Activated CD4-positive, alpha-beta memory T cell treated with anti-CD3 and anti-CD28 coated beads, Interleukin-2, amount 10 ng/mL, durations not matched to agents 7 days and 5 days (primary cell): ENCODE measurements at regions of chr10 and their contacts with region 1.

Region 1: DNA sequence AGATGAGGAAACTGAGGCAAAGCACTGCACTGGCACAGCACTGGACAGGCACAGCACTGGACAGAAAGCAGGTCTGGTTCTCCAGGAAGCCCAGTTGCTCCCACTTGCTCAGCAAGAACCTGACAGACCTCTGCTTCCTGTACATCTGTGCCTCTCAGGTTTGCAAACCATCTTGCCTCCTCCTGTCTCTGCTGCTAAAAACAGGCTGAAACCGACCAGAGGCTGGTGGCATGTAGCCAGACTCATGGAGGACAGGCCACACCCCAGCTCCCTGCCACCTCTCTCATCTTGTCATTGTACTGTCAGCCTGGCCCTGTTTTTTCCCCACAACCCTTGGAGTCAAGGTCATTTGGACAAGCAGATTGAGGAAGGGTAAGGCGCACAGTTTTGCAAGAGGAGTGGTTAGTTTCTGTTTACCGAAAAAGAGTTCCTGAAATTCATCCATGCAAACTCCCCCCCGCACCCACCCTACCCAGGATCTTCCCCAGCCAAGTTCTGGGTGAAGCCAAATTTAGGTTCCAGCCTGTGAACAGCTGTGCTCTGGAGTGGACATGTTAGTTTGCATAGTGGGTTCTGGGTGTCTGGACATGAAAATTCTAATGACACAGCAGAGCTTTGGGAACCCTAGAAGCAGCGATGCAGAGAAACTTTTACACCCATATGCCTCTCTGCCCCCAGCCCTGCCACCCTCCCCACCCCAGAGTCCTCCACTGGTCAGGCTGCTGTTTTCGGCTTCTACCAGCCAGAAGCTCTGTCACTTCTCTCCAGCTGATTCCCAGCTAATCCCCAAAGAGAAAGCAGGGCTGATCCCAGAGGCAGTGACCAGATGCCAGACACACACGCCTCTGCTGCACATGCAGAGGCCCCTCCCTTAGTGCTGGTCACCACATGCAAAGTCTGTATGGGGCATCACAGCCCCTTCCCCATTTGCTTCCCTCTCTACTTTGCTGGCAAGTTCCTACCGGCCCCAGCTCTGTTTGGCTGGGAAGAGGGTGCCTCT is 8.5 kb upstream of the C10orf105 start:
- DNase-seq: peak; percentile 76
- H3K4me3 Mint-ChIP-seq: peak overlapping the region; percentile 52
- H3K27ac Mint-ChIP-seq: peak overlapping the region; percentile 98
- H3K4me1 Mint-ChIP-seq: peaks cover 76% of the 10 kb centered on the region
- H3K27me3 Mint-ChIP-seq: no peaks in the 10 kb centered on the region

Region 2: GRCh38 chr10:71561003-71561574 is 166.9 kb before region 1 on chr10:
- CTCF ChIA-PET with region 1: no interaction called
- POLR2A ChIA-PET with region 1: no interaction called
- DNase-seq: no peak
- H3K4me3 Mint-ChIP-seq: no peak overlapping the region
- H3K27ac Mint-ChIP-seq: no peak overlapping the region
- H3K4me1 Mint-ChIP-seq: no peaks in the 10 kb centered on the region
- H3K27me3 Mint-ChIP-seq: peaks cover 27% of the 10 kb centered on the region

Region 3: DNA sequence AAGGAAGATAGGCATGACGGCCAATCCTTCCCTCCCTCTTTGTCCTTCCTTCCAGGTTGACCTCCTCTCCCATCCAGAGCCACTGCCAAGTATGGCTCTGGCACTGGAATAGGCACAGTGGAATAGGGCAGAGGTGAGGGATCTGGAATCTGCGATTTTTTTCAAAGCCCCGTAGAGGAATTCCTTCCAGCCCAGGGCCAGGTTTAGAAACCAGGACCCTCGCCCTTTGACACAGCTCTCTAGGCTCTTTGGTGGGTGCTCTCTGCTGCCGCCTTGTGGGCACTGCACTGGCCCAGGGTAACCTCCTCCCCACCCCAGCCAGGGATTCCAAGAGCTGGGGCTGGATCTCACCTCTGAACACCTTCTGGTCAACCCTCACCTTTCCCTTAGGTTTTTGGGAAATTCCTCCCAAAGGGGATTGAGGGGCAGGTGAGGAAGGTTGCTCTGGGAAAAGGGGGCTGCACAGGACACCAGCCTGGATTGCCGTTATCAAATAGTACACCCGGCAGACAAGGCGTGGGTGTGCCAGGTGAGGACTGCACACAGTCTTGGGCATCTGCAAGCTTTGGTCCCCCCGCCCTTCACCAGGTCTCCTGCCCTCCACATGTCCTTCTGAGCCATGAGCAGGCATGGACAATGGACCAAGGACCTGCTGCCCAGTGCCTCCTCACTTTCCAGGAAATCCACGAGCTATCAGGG is 31.3 kb before region 1 on chr10:
- CTCF ChIA-PET with region 1: interaction called, 35 read pairs
- POLR2A ChIA-PET with region 1: interaction called, 12 read pairs
- DNase-seq: peak; percentile 71
- H3K4me3 Mint-ChIP-seq: no peak overlapping the region
- H3K27ac Mint-ChIP-seq: no peak overlapping the region
- H3K4me1 Mint-ChIP-seq: peaks cover 65% of the 10 kb centered on the region
- H3K27me3 Mint-ChIP-seq: no peaks in the 10 kb centered on the region

Region 4: GRCh38 chr10:71713135-71714030 is 14.7 kb before region 1 on chr10:
- CTCF ChIA-PET with region 1: interaction called, 16 read pairs
- POLR2A ChIA-PET with region 1: interaction called, 47 read pairs
- DNase-seq: peak; percentile 52
- H3K4me3 Mint-ChIP-seq: peak overlapping the region; percentile 66
- H3K27ac Mint-ChIP-seq: peak overlapping the region; percentile 92
- H3K4me1 Mint-ChIP-seq: peaks cover 54% of the 10 kb centered on the region
- H3K27me3 Mint-ChIP-seq: no peaks in the 10 kb centered on the region

Region 5: DNA sequence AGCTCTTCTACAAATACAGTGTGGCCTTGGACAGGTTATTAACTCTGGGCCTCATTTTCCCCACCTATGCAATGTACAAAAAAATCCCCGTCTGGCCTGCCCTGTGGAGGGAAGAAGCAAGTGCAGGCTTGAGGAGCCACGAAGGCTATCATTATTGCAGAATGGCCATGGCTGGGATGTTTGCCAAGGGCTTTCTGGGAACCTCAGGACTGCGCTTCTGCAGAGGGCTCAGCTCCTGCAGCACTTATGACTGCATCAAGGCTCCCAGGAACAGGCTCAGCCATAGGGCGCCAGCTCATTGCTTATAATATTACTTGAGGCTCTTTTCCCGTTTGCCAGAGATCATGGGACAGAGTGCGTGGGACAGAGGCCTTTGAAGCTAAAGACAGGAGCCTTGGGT is 12.0 kb after region 1 on chr10:
- CTCF ChIA-PET with region 1: interaction called, 23 read pairs
- POLR2A ChIA-PET with region 1: interaction called, 310 read pairs
- DNase-seq: no peak
- H3K4me3 Mint-ChIP-seq: no peak overlapping the region
- H3K27ac Mint-ChIP-seq: no peak overlapping the region
- H3K4me1 Mint-ChIP-seq: peaks cover 90% of the 10 kb centered on the region
- H3K27me3 Mint-ChIP-seq: no peaks in the 10 kb centered on the region

Region 6: GRCh38 chr10:71748671-71749191 is 20.7 kb after region 1 on chr10:
- CTCF ChIA-PET with region 1: interaction called, 40 read pairs
- POLR2A ChIA-PET with region 1: interaction called, 310 read pairs
- DNase-seq: peak; percentile 93
- H3K4me3 Mint-ChIP-seq: peak overlapping the region; percentile 43
- H3K27ac Mint-ChIP-seq: peak overlapping the region; percentile 95
- H3K4me1 Mint-ChIP-seq: peaks cover 97% of the 10 kb centered on the region
- H3K27me3 Mint-ChIP-seq: no peaks in the 10 kb centered on the region

Region 7: GRCh38 chr10:71756311-71757191 is 28.5 kb after region 1 on chr10:
- CTCF ChIA-PET with region 1: interaction called, 14 read pairs
- POLR2A ChIA-PET with region 1: interaction called, 37 read pairs
- DNase-seq: no peak
- H3K4me3 Mint-ChIP-seq: peak overlapping the region; percentile 21
- H3K27ac Mint-ChIP-seq: peak overlapping the region; percentile 87
- H3K4me1 Mint-ChIP-seq: peaks cover 78% of the 10 kb centered on the region
- H3K27me3 Mint-ChIP-seq: no peaks in the 10 kb centered on the region

Region 8: DNA sequence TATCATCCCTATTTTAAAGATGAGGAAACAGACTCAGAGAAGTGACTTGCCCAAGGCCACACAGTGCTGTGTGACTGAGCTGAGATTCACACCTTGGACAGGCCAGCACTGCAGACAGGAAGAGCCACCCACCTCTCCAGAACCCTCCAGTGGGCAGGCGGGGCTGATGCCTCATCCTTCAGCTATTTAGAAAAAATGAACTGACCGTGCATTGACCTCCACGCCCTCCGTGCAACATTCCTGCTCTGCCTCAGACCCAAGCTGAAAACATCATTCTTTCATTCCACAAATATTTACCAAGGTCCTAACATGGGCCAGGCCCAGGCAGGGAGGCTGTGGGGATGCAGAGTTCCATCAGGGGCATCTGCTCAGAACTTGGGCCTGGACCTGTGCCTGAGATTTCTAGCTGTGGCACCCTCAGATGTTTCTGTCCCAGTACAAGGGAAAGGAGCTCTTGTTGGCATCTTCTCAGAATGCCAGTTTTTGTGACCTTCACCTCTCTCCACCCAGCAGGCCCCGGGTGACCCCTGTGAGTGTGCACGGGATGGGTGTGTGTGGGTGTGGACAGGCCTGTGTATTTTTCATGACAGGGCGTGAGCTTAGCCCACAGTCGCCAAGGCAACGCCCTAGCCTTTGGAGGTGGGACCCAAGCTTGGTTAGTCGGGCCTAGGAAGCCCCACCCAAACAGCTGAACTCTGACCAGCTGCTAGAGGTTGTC is 38.8 kb after region 1 on chr10:
- CTCF ChIA-PET with region 1: interaction called, 78 read pairs
- POLR2A ChIA-PET with region 1: interaction called, 162 read pairs
- DNase-seq: peak; percentile 67
- H3K4me3 Mint-ChIP-seq: peak overlapping the region; percentile 57
- H3K27ac Mint-ChIP-seq: peak overlapping the region; percentile 91
- H3K4me1 Mint-ChIP-seq: peaks cover 85% of the 10 kb centered on the region
- H3K27me3 Mint-ChIP-seq: no peaks in the 10 kb centered on the region